ENCODE measurements at regions of chr1 and their contacts with region 1.

Region 1: DNA sequence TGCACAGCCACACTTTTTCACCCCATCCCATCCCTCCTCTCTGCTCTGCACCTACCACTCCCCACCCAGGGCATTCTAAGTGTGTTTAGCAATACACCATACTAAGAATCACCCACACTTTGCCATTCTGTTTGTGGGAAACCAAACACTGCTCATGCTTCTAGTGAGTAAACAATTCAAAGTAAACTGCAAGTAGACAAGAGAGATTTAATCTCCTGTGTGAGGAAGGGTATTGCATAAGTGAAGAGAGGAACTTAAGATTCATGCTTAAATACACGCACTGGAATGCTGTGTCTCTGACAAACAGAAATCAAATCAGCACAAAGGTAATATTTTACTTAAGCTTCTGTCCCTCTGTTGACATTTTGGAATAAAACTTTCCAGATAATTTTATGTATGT is 4.8 kb upstream of the EDARADD start:
- DNase-seq: no peak

Region 2: GRCh38 chr1:236247286-236247685 is 142.0 kb before region 1 on chr1:
- in situ Hi-C with region 1: no loop called
- DNase-seq: no peak

Region 3: GRCh38 chr1:236489710-236490377 is 100.6 kb after region 1 on chr1:
- in situ Hi-C with region 1: loop called (anchors 10 kb)
- DNase-seq: peak; percentile 37

Region 4: DNA sequence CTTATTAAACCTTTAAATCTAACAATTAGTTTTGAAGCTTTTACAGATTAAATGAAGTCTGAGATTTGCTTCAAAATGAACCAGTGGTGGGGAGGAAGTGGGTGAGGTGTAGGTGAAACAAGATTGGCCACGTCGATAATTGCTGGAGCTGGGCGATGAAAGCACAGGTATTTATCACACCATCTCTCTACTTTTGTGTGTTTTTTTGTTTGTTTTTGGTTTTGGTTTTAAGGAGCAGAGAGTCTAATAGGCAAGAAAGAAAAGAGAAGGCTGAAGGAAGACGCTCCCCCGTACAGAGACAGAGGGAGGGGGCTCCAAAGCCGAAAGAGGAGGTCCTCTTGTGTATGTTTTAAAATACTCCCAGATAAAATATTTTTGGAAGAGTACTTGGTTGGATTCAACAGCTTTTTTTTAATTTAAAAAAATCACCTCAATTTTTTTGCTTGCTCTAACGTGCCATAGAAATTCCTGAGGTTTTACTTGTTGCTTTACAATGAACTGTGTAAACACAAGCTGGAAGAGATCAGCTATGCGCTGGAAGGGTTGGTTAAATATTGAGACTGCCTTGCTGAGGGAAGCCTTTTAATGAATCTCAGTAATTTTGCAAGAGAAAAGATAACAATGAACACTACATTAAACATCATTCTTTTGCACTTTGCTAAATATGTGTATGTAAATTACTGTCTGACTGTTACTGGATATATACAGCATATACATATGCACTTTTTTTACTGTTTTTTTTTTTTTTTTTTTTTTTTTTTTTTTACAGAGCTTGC is 127.9 kb after region 1 on chr1:
- in situ Hi-C with region 1: no loop called
- DNase-seq: peak; percentile 66

Measured in Caki2 (cell line).